Naive thymus-derived CD4-positive, alpha-beta T cell (primary cell): ENCODE measurements at regions of chr3 and their contacts with region 1.

Region 1: DNA sequence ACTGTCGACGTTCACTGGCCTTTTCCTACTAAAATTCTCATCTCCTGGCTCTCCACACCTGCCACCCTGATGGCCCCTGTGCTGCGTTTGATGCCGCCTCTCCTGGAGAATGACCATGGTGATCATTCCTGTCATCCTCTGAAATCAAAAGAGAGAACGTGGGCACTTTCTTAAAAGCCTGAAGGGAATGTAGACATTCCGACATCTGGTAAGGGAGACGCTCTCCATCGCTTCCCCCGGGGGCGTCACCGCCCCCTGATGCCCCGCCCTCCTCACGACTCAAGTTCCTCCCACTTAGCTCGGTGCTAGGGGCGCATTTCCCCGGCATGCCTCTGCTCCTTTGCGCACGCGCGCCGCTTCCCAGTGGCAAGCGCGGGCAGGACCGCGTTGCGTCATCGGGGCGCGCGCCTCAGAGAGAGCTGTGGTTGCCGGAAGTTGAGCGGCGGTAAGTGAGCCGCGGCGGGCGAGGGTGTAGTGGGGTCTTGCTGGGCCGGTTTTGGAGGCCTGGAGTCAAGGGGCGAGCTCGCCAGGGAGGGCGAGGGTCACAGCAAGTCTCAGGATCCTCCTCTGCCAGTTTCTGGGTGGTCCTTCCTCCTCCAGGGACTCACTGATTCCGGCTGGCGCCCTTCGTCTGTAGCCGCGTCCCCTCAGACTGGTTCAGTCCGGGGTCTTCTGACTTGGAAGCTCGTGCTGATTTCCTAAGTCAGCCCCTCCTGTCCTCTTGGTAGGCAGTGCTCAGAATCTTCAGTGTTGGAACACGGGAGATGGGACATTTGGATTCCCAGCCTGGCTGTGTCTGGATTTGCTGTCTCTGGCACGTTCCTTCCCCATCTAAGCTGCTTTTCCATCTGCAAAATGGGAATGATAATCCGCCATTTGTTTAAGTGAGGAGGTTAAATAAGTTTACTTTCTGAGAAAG is at the start of gene ATG7:
- DNase-seq: peak; percentile 95 to 98 (median 97)
- ATAC-seq: peak; percentile 96
- H3K4me3 ChIP-seq: peak within 1 kb of the TSS; percentile 79
- H3K4me3 Mint-ChIP-seq: peak within 1 kb of the TSS; percentile 90 to 98 (median 96)
- H3K27ac ChIP-seq: peak within 1 kb of the TSS; percentile 92
- H3K27ac Mint-ChIP-seq: peak within 1 kb of the TSS; percentile 93 to 99 (median 98)
- H3K4me1 ChIP-seq: peaks cover 13 to 17% of the 10 kb centered on the region in 2 donors
- H3K4me1 Mint-ChIP-seq: peaks cover 34 to 56% (median 49%) of the 10 kb centered on the region in 7 donors
- H3K27me3 ChIP-seq: no peaks in the 10 kb centered on the region
- H3K27me3 Mint-ChIP-seq: peaks cover 0 to 2% (median 2%) of the 10 kb centered on the region in 5 donors
- total RNA-seq, gene ATG7: 27.0 to 80.3 (median 39.8) TPM

Region 2: DNA sequence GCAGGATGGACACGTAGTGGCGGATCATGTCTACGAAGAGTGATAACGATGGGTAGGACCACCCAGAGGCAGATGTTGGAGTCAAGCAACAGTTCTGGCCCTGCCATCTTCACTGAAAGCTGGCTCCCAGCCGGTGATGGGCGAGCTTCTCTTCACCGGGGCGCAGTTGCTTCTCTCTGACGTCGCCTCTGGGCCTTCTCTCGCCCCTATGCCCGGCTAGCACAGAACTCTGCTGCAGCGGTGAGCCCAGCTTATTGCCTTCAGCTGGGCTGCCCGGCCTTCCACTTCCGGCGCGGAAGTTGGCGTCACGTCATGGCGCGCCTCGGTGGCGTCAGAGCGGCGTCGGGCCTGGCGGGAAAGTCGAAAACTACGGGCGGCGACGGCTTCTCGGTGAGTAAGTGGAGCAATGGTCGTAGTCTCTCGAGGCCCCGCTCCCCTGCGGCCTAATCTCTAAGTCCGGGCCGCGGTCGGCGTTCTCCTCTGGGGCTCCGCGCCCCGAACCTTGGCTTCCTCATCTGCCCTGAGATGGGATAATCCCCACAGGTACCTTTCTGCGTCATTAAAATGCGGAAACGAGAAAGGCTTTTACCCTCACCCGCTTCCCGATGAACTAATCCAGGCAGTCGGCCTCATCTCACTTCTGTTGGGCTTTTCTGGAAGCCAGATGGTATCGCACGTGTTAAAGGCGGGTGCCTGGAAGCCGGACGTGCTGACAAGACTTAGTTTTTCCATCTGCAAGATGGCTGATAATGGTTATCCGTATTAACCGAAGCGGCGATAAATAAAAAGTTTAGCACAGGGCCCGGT is 1246.0 kb before region 1 on chr3 and contains the start of gene FANCD2:
- CTCF ChIA-PET with region 1: no interaction called
- POLR2A ChIA-PET with region 1: no interaction called
- intact Hi-C with region 1: loop called in 1 of 2 experiments (anchors 5 kb)
- DNase-seq: peak; percentile 88 to 99 (median 94)
- ATAC-seq: peak; percentile 95
- H3K4me3 ChIP-seq: peak within 1 kb of the TSS; percentile 96
- H3K4me3 Mint-ChIP-seq: peak within 1 kb of the TSS; percentile 93 to 99 (median 96)
- H3K27ac ChIP-seq: peak within 1 kb of the TSS; percentile 89
- H3K27ac Mint-ChIP-seq: peak within 1 kb of the TSS; percentile 86 to 98 (median 97)
- H3K4me1 ChIP-seq: peaks cover 11 to 13% of the 10 kb centered on the region in 2 donors
- H3K4me1 Mint-ChIP-seq: peaks cover 0 to 45% (median 29%) of the 10 kb centered on the region in 7 donors
- H3K27me3 ChIP-seq: no peaks in the 10 kb centered on the region
- H3K27me3 Mint-ChIP-seq: no peaks in the 10 kb centered on the region
- total RNA-seq, gene FANCD2: 18.3 to 41.5 (median 34.1) TPM

Region 3: DNA sequence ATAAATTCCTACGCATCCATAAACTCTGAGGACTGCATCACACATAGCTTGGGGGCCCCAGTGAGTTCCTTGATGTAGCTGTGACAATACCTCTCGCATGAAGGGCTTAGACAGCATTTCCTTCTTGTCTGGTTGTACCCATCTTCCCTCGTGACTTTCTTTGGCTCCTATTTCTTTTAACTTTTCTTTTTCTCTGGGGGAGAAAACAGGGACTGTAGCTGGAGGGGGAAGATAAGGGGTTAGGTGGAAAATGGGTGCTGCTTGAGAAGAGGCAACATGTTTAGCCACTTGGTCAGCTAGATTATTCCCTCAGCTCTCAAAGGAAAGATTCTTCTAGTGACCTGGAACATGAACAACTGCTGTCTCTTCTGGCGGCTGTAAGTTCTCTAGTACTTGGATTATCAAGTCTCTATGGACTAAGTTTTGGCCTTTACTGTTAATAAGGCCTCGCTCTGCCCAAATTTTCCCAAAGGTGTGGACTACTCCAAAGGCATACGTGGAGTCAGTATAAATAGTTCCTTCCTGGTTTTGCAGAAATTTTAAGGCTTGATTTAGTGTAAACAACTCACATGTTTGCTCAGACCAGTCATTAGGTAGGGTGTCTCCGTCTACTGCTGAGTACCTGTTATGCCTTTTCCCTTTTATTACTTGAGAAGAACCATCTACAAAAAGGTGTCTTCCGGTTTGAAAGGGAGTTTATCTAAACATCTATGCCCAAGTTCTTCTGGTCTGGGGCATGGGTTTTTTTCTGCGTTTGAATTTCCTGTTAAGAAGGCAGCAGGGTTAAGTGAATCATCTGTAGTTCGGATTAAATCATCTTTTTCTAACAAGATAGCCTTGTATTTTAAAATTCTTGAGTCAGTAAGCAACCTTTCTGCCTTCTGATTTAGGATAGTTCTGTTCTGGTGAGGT is 21.1 kb before region 1 on chr3:
- CTCF ChIA-PET with region 1: no interaction called
- POLR2A ChIA-PET with region 1: interaction called, 3 read pairs
- intact Hi-C with region 1: loop called in 1 of 2 experiments (anchors 2 kb)
- DNase-seq: peak in 4 of 9 donors; percentile 3 to 24 (median 16)
- ATAC-seq: peak; percentile 22
- H3K4me3 ChIP-seq: no peak overlapping the region
- H3K4me3 Mint-ChIP-seq: peak overlapping the region in 7 of 10 donors; percentile 16 to 59 (median 34)
- H3K27ac ChIP-seq: no peak overlapping the region
- H3K27ac Mint-ChIP-seq: peak overlapping the region; percentile 20 to 84 (median 63)
- H3K4me1 ChIP-seq: peaks cover 0 to 12% of the 10 kb centered on the region in 2 donors
- H3K4me1 Mint-ChIP-seq: peaks cover 0 to 20% (median 15%) of the 10 kb centered on the region in 7 donors
- H3K27me3 ChIP-seq: no peaks in the 10 kb centered on the region
- H3K27me3 Mint-ChIP-seq: peaks cover 0 to 4% (median 3%) of the 10 kb centered on the region in 5 donors

Region 4: DNA sequence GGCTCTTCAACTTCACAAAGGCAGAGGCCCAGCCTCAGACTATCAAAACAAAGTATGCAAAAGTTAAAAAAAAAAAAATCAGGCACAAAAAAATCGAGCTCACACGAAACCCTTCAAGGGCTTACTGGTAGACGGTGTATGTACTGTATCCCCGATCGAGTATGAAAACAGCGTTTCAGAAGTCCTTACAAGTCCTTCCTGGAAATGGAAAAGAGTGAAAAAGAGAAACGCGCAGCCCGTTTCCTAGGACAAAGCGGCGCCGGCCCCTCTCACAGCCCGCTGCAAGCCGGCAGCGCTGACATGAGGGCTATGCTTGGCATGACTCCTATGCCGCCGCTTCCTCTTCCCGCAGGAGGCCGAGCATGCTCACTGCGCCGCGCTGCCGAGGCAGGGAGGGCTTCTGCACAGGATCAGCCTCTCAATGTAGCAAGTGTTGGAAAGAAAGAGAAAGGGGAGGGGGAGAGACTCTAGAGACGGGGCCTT is 371.4 kb after region 1 on chr3 and contains the start of gene VGLL4:
- CTCF ChIA-PET with region 1: no interaction called
- POLR2A ChIA-PET with region 1: interaction called, 5 read pairs
- intact Hi-C with region 1: loop called (anchors 1 kb)
- DNase-seq: peak; percentile 42 to 71 (median 58)
- ATAC-seq: peak; percentile 72
- H3K4me3 ChIP-seq: peak within 1 kb of the TSS; percentile 98
- H3K4me3 Mint-ChIP-seq: peak within 1 kb of the TSS; percentile 90 to 100 (median 98)
- H3K27ac ChIP-seq: peak within 1 kb of the TSS; percentile 91
- H3K27ac Mint-ChIP-seq: peak within 1 kb of the TSS; percentile 94 to 100 (median 99)
- H3K4me1 ChIP-seq: peaks cover 12 to 23% of the 10 kb centered on the region in 2 donors
- H3K4me1 Mint-ChIP-seq: peaks cover 22 to 43% (median 37%) of the 10 kb centered on the region in 7 donors
- H3K27me3 ChIP-seq: no peaks in the 10 kb centered on the region
- H3K27me3 Mint-ChIP-seq: peaks cover 0 to 17% (median 0%) of the 10 kb centered on the region in 5 donors
- total RNA-seq, gene VGLL4: 22.9 to 44.8 (median 36.2) TPM

Region 5: GRCh38 chr3:11770477-11771391 is 498.5 kb after region 1 on chr3:
- CTCF ChIA-PET with region 1: no interaction called
- POLR2A ChIA-PET with region 1: interaction called, 5 read pairs
- intact Hi-C with region 1: loop called in 1 of 2 experiments (anchors 1 kb)
- DNase-seq: peak; percentile 31 to 91 (median 86)
- ATAC-seq: peak; percentile 100
- H3K4me3 ChIP-seq: peak overlapping the region; percentile 12
- H3K4me3 Mint-ChIP-seq: peak overlapping the region; percentile 22 to 79 (median 62)
- H3K27ac ChIP-seq: peak overlapping the region; percentile 56
- H3K27ac Mint-ChIP-seq: peak overlapping the region; percentile 58 to 90 (median 70)
- H3K4me1 ChIP-seq: peaks cover 15% of the 10 kb centered on the region in 2 donors
- H3K4me1 Mint-ChIP-seq: peaks cover 11 to 30% (median 24%) of the 10 kb centered on the region in 7 donors
- H3K27me3 ChIP-seq: no peaks in the 10 kb centered on the region
- H3K27me3 Mint-ChIP-seq: no peaks in the 10 kb centered on the region

Region 6: DNA sequence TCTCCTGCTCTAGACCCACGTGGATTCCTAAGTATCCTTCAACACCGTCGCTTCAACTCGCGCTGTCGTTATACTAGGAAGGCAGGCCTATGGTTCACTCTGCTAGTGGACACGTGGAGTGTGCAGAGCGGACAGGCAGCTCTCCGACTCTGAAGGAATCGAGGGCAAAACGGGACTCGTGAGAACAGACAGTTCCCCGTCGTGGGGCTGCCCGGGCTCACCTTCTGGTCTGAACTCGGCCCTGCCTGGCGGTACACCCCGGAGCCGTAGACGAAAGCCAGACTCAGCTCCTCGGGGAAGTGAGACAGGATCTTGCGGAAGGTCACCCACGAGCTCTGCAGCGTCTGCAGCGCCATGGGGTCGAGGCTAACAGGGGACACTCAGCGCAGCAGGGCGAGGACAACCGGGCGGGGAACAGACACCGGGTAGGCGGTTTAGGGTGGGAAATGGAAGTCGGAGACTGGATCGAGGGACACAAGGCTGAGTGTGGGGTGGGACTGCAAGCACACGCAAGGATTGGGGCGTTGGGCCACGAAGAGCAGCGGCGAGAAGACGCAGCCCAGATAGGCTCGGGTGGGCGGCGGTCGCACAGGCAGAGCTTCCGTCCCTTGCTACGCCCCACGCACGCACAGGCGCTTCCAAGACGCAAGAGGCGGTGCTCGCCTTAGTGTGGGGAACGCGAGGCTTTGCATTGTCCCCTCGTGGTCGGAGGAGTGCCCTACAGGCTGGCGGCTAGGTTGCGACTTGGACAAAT is 574.2 kb after region 1 on chr3 and contains the start of gene TAMM41:
- CTCF ChIA-PET with region 1: no interaction called
- POLR2A ChIA-PET with region 1: interaction called, 9 read pairs
- intact Hi-C with region 1: loop called (anchors 1 to 10 kb)
- DNase-seq: peak; percentile 68 to 88 (median 85)
- ATAC-seq: peak; percentile 100
- H3K4me3 ChIP-seq: peak within 1 kb of the TSS; percentile 92
- H3K4me3 Mint-ChIP-seq: peak within 1 kb of the TSS; percentile 93 to 99 (median 98)
- H3K27ac ChIP-seq: peak within 1 kb of the TSS; percentile 90
- H3K27ac Mint-ChIP-seq: peak within 1 kb of the TSS; percentile 90 to 98 (median 96)
- H3K4me1 ChIP-seq: peaks cover 23 to 31% of the 10 kb centered on the region in 2 donors
- H3K4me1 Mint-ChIP-seq: peaks cover 21 to 62% (median 54%) of the 10 kb centered on the region in 7 donors
- H3K27me3 ChIP-seq: no peaks in the 10 kb centered on the region
- H3K27me3 Mint-ChIP-seq: peaks cover 0 to 12% (median 0%) of the 10 kb centered on the region in 5 donors
- total RNA-seq, gene TAMM41: 24.4 to 58.0 (median 28.6) TPM

Region 7: GRCh38 chr3:12556671-12557472 is 1284.6 kb after region 1 on chr3 and contains the start of gene MKRN2:
- CTCF ChIA-PET with region 1: no interaction called
- POLR2A ChIA-PET with region 1: no interaction called
- intact Hi-C with region 1: loop called in 1 of 2 experiments (anchors 10 kb)
- DNase-seq: peak; percentile 74 to 89 (median 83)
- ATAC-seq: peak; percentile 98
- H3K4me3 ChIP-seq: peak within 1 kb of the TSS; percentile 95
- H3K4me3 Mint-ChIP-seq: peak within 1 kb of the TSS; percentile 90 to 100 (median 96)
- H3K27ac ChIP-seq: peak within 1 kb of the TSS; percentile 94
- H3K27ac Mint-ChIP-seq: peak within 1 kb of the TSS; percentile 87 to 95 (median 93)
- H3K4me1 ChIP-seq: peaks cover 31 to 38% of the 10 kb centered on the region in 2 donors
- H3K4me1 Mint-ChIP-seq: peaks cover 40 to 71% (median 68%) of the 10 kb centered on the region in 7 donors
- H3K27me3 ChIP-seq: peaks cover 6% of the 10 kb centered on the region in 2 donors
- H3K27me3 Mint-ChIP-seq: peaks cover 22 to 37% (median 28%) of the 10 kb centered on the region in 5 donors
- total RNA-seq, gene MKRN2: 21.9 to 34.5 (median 25.4) TPM